ENCODE measurements at regions of chr4 and their contacts with region 1.

Region 1: DNA sequence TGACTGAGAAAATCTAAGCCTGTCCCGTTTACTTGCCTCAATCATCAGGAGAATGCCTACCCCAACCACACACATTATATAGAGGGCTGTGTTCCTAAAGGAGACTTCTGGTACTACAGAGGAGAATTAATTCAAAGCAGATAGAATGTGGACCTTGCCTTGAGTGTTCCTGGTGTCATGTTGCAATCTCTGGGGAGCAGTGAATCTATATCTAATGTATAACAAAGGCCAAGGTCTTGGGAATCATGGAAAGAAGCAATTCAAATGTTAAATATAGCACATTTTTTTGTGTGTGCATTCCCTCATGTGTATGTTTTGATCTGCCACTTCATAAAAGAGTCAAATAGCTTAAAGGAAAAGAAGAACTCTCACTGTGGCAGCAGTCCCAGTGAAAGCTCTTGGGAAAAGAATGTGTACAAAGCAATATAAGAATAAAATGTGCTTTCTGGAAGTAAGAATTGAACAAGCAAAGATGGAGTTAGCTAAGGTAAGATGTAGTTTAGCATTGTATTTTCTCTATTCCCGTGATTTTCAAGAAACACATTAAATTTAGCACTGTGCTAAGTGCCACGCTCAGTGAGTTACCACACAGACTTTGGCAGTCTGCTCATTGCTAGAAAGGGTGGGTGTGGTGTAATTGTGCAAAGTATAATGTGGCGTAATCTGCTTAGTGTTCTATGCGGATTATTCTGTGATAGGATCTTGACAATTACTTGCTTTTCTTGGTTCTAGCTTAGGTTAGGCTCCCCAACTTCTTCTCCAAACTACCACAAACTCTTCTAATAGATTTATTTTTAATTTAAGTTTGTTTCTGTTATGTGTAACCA is 13.7 kb downstream of the ADH6 start:
- DNase-seq: no peak
- ATAC-seq: peak; percentile 67
- H3K4me3 ChIP-seq: no peak overlapping the region
- H3K27ac ChIP-seq: peak overlapping the region; percentile 57 to 71
- H3K4me1 ChIP-seq: peaks cover 2 to 4% of the 10 kb centered on the region in 2 donors
- H3K27me3 ChIP-seq: no peaks in the 10 kb centered on the region

Region 2: GRCh38 chr4:99088481-99089365 is 116.6 kb before region 1 on chr4 and contains the start of gene ADH5:
- intact Hi-C with region 1: loop called in 1 of 2 experiments (anchors 10 kb)
- DNase-seq: peak; percentile 93 to 97
- ATAC-seq: peak; percentile 97
- H3K4me3 ChIP-seq: peak within 1 kb of the TSS; percentile 94 to 97
- H3K27ac ChIP-seq: peak within 1 kb of the TSS; percentile 95 to 98
- H3K4me1 ChIP-seq: no peaks in the 10 kb centered on the region
- H3K27me3 ChIP-seq: no peaks in the 10 kb centered on the region
- total RNA-seq, gene ADH5: 230 to 231 TPM

Region 3: GRCh38 chr4:99134586-99134985 is 70.8 kb before region 1 on chr4:
- intact Hi-C with region 1: loop called in 1 of 2 experiments (anchors 10 kb)
- DNase-seq: no peak
- ATAC-seq: no peak
- H3K4me3 ChIP-seq: no peak overlapping the region
- H3K27ac ChIP-seq: no peak overlapping the region
- H3K4me1 ChIP-seq: no peaks in the 10 kb centered on the region
- H3K27me3 ChIP-seq: no peaks in the 10 kb centered on the region

Region 4: GRCh38 chr4:99248714-99249113 is 43.3 kb after region 1 on chr4:
- intact Hi-C with region 1: loop called (anchors 2 to 5 kb)
- DNase-seq: no peak
- ATAC-seq: no peak
- H3K4me3 ChIP-seq: no peak overlapping the region
- H3K27ac ChIP-seq: no peak overlapping the region
- H3K4me1 ChIP-seq: no peaks in the 10 kb centered on the region
- H3K27me3 ChIP-seq: no peaks in the 10 kb centered on the region

Region 5: GRCh38 chr4:99300934-99301333 is 95.6 kb after region 1 on chr4:
- intact Hi-C with region 1: loop called (anchors 5 kb)
- DNase-seq: peak; percentile 86 to 91
- ATAC-seq: peak; percentile 86
- H3K4me3 ChIP-seq: no peak overlapping the region
- H3K27ac ChIP-seq: peak overlapping the region in 1 of 2 donors; percentile 57
- H3K4me1 ChIP-seq: peaks cover 1 to 4% of the 10 kb centered on the region in 2 donors
- H3K27me3 ChIP-seq: no peaks in the 10 kb centered on the region

Region 6: DNA sequence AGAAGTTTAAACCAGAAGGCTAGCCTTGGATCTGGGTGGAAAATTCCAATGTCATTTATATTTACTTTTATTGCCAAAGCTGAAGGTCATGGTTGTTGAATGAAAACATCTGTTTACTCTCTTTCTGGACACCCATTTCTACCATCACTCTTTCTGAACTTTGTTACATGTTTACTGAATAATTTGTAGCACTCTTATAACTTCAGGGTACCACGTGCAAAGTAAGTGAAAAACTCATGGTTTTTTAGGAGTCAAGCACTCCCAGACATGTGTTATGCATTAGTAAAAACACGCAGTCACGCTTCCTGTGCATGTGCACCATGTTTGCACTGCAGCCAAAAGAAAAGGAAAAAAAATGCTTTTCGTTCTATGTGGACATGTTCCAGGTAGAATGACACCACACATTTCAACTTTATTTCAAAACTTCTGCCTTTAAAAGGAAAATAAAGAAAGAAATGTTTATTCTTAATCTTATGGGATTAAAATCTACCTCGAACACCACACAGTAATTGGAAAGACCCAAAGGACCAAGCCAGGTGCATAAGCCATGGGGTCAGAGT is 178.5 kb after region 1 on chr4:
- intact Hi-C with region 1: loop called in 1 of 2 experiments (anchors 5 kb)
- DNase-seq: peak in 1 of 2 donors; percentile 56
- ATAC-seq: peak; percentile 91
- H3K4me3 ChIP-seq: no peak overlapping the region
- H3K27ac ChIP-seq: peak overlapping the region in 1 of 2 donors; percentile 95
- H3K4me1 ChIP-seq: no peaks in the 10 kb centered on the region
- H3K27me3 ChIP-seq: no peaks in the 10 kb centered on the region

Region 7: DNA sequence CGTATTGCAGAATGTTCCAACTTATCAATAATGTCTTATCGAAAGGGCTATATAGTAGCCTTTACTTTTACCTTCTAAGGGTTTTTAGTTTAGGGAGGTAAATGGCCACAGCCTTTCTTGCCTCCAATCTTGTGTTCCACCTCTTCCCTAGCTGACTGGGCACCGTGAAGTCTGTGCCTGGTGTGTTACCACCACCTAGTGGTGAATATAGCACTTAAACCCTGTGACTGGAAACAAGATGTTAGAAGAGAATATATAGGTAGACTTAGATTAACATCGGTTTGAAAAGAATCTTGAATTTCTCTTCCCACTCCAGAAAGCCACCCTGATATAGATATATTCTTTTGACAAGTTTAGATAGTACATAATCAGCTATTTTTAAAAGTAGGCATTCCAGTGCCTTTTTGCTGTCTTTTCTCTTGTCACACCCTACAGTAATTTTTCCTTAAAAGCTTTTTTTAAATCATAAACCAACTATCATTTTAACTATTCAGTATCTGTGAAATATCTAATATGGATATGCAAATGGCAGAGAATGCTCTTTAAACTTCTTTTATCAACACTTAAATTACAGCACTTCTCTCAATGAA is 257.6 kb after region 1 on chr4:
- intact Hi-C with region 1: loop called (anchors 5 kb)
- DNase-seq: peak in 1 of 2 donors; percentile 59
- ATAC-seq: peak; percentile 90
- H3K4me3 ChIP-seq: no peak overlapping the region
- H3K27ac ChIP-seq: no peak overlapping the region
- H3K4me1 ChIP-seq: no peaks in the 10 kb centered on the region
- H3K27me3 ChIP-seq: no peaks in the 10 kb centered on the region